ENCODE measurements at regions of chr1 and their contacts with region 1.

Region 1: DNA sequence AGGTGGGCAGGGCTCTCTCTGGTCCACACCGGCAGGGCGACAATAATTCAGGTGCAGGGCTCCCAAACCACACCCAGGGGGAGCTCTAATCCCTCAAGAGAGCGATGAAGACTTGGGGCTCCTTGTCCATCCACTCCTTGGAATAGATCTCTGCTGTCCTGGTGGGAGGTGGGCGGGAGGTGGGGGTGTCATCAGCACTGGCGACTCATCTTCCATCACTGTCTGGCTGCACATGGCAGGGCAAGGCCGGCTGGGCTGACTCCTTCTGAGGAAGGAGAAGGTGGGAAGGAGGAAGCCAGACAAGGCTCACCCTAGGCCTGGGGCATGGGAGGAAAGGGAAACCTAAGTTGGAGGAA is 29.3 kb downstream of the TNNT2 start:
- DNase-seq: peak; percentile 75
- CTCF ChIP-seq: peak; percentile 62

Region 2: DNA sequence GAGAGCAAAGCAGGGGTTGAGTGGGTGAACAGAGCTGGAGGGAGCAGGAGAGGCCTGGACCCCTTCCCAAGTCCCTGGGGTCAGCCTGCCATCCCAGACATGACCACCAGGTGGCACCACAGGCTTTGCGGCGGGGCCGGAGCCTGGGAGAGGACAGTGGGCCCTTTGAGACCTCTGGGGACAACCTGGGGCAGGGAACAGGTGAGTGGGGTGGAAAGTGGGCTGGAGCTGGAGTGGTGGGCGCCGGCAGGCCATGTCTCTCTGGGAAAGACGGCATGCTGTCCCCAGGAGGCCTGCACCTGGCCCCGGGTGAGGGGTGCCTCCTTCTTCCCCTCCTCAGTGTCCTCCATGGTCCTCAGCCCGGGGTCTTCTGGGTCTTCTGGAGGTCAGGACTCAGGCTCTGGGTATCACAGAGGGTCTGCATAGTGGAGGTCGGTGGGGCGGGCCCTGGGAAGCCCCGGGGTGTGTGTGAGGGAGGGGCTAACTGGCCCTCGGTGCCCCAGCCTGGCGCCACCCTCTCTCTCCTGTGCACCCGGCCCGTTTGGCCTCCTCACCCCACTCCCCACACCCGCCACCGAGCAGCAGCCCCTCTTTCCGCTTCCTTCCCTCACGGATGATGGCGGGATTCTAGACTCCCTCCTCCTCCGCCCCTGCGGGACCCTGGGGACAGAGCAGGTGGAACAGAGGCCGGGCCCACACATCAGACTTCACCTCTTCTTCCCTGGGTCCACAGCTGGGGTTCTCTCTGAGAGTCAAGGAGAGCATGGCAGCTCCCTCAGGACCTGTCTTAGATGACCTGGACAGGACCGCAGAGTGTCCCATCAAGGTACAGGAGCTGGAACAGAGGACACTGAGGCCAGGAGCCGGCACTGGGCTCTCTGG is 93.3 kb before region 1 on chr1:
- CTCF ChIA-PET with region 1: interaction called, 13 read pairs
- POLR2A ChIA-PET with region 1: no interaction called
- DNase-seq: peak; percentile 89
- CTCF ChIP-seq: peak; percentile 94

Region 3: GRCh38 chr1:201329286-201329685 is 18.9 kb before region 1 on chr1:
- CTCF ChIA-PET with region 1: interaction called, 11 read pairs
- POLR2A ChIA-PET with region 1: no interaction called
- DNase-seq: no peak
- CTCF ChIP-seq: no peak

Region 4: GRCh38 chr1:201525197-201525778 is 177.1 kb after region 1 on chr1:
- CTCF ChIA-PET with region 1: no interaction called
- POLR2A ChIA-PET with region 1: no interaction called
- DNase-seq: no peak
- CTCF ChIP-seq: no peak

Measured in GM10248 (cell line).